ENCODE measurements at regions of chr10 and their contacts with region 1.

Region 1: GRCh38 chr10:114821293-114821914 is at the start of gene FHIP2A:
- DNase-seq: peak; percentile 69 to 96 (median 87)
- ATAC-seq: peak; percentile 98
- H3K4me3 ChIP-seq: peak within 1 kb of the TSS; percentile 83
- H3K4me3 Mint-ChIP-seq: peak within 1 kb of the TSS; percentile 79 to 96 (median 94)
- H3K27ac ChIP-seq: peak within 1 kb of the TSS; percentile 87
- H3K27ac Mint-ChIP-seq: peak within 1 kb of the TSS; percentile 86 to 95 (median 92)
- H3K4me1 ChIP-seq: peaks cover 6 to 22% of the 10 kb centered on the region in 2 donors
- H3K4me1 Mint-ChIP-seq: peaks cover 14 to 44% (median 33%) of the 10 kb centered on the region in 7 donors
- H3K27me3 ChIP-seq: no peaks in the 10 kb centered on the region
- H3K27me3 Mint-ChIP-seq: peaks cover 0 to 29% (median 0%) of the 10 kb centered on the region in 5 donors
- total RNA-seq, gene FHIP2A: 17.5 to 28.7 (median 19.6) TPM

Region 2: DNA sequence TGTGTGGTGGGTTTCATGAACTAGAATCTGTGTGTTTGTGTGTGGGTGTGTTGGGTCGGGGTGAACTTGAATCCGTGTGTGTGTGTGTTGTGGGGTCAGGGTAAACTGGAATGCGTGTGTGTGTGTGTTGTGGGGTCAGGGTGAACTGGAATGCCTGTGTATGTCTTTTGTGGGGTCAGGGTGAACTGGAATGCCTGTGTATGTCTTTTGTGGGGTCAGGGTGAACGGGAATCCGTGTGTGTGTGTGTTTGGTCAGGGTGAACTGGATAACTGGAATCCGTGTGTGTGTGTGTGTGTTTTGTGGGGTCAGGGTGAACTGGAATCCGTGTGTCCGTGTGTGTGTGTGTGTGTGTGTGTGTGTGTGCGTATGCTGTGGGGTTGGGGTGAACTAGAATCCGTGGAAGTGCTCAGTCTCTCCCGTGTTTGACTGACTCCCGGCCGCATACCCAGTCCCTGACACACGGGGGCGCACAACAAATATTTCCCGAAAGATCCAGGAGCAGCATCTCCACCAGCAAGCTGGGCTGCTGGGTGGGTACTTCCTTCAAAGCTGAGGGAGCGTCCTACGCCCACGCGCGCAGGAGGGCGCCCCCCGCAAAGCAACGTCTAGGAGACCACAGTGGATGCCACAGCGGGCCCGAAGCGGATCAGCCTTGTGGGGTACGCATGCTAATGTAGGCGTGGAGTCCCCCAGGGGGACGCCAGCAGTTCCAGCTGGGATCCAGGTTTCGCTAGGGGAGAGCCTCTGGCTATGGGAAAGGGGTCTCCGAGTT is 1142.5 kb before region 1 on chr10:
- CTCF ChIA-PET with region 1: no interaction called
- POLR2A ChIA-PET with region 1: no interaction called
- intact Hi-C with region 1: loop called in 1 of 2 experiments (anchors 10 kb)
- DNase-seq: peak; percentile 32 to 73 (median 51)
- ATAC-seq: peak; percentile 55
- H3K4me3 ChIP-seq: peak overlapping the region; percentile 96
- H3K4me3 Mint-ChIP-seq: peak overlapping the region; percentile 90 to 100 (median 94)
- H3K27ac ChIP-seq: peak overlapping the region; percentile 70
- H3K27ac Mint-ChIP-seq: peak overlapping the region; percentile 56 to 96 (median 90)
- H3K4me1 ChIP-seq: peaks cover 6 to 11% of the 10 kb centered on the region in 2 donors
- H3K4me1 Mint-ChIP-seq: peaks cover 36 to 44% (median 40%) of the 10 kb centered on the region in 7 donors
- H3K27me3 ChIP-seq: no peaks in the 10 kb centered on the region
- H3K27me3 Mint-ChIP-seq: peaks cover 0 to 17% (median 3%) of the 10 kb centered on the region in 5 donors

Region 3: GRCh38 chr10:114173921-114174694 is 647.3 kb before region 1 on chr10 and contains the start of gene CCDC186:
- CTCF ChIA-PET with region 1: no interaction called
- POLR2A ChIA-PET with region 1: interaction called, 5 read pairs
- intact Hi-C with region 1: loop called (anchors 1 to 5 kb)
- DNase-seq: peak; percentile 90 to 98 (median 97)
- ATAC-seq: peak; percentile 98
- H3K4me3 ChIP-seq: peak within 1 kb of the TSS; percentile 83
- H3K4me3 Mint-ChIP-seq: peak within 1 kb of the TSS; percentile 88 to 100 (median 96)
- H3K27ac ChIP-seq: peak within 1 kb of the TSS; percentile 88
- H3K27ac Mint-ChIP-seq: peak within 1 kb of the TSS; percentile 92 to 99 (median 98)
- H3K4me1 ChIP-seq: peaks cover 0 to 8% of the 10 kb centered on the region in 2 donors
- H3K4me1 Mint-ChIP-seq: peaks cover 17 to 51% (median 33%) of the 10 kb centered on the region in 7 donors
- H3K27me3 ChIP-seq: no peaks in the 10 kb centered on the region
- H3K27me3 Mint-ChIP-seq: peaks cover 0 to 24% (median 0%) of the 10 kb centered on the region in 5 donors
- total RNA-seq, gene CCDC186: 18.6 to 42.9 (median 34.5) TPM

Region 4: GRCh38 chr10:114526504-114527238 is 294.7 kb before region 1 on chr10:
- CTCF ChIA-PET with region 1: no interaction called
- POLR2A ChIA-PET with region 1: interaction called, 3 read pairs
- intact Hi-C with region 1: loop called in 1 of 2 experiments (anchors 1 kb)
- DNase-seq: peak; percentile 64 to 97 (median 95)
- ATAC-seq: peak; percentile 94
- H3K4me3 ChIP-seq: peak overlapping the region; percentile 85
- H3K4me3 Mint-ChIP-seq: peak overlapping the region; percentile 88 to 100 (median 98)
- H3K27ac ChIP-seq: peak overlapping the region; percentile 94
- H3K27ac Mint-ChIP-seq: peak overlapping the region; percentile 92 to 100 (median 98)
- H3K4me1 ChIP-seq: peaks cover 35 to 45% of the 10 kb centered on the region in 2 donors
- H3K4me1 Mint-ChIP-seq: peaks cover 34 to 64% (median 53%) of the 10 kb centered on the region in 7 donors
- H3K27me3 ChIP-seq: no peaks in the 10 kb centered on the region
- H3K27me3 Mint-ChIP-seq: peaks cover 0 to 4% (median 0%) of the 10 kb centered on the region in 5 donors

Region 5: DNA sequence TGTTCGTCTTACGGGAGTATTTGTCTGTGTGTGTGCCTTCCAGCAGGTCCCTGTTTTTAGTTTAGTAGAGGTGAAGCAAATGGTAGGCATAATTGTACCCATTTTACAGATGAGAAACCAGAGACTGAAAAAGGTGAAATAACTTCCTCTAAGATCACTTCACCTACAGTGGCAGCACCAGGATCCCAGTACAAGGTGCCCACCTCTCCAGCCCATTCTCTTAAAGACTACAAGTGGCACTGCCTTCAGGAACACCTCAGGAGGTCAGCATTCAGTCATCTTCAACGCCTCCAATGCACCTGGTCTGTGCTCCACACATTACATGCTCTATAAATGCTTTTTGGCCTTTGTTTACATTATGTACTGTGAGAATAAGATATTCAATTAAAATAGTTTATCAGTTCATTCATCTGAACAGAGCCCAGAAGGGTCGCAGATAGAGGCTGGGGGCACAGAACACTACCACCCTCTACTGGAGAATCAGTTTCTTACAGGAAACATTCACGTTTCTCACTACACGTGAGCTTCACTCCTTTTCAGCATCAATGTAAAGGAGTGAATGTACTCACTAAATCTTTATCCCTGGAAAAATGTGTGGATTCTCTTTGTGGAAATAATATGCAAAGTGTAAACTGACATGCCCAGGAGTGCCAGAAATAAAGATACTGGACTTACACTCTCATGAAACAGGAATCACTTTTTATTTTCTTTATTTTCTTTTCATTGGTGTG is 117.9 kb before region 1 on chr10:
- CTCF ChIA-PET with region 1: no interaction called
- POLR2A ChIA-PET with region 1: no interaction called
- intact Hi-C with region 1: loop called in 1 of 2 experiments (anchors 10 kb)
- DNase-seq: peak in 7 of 9 donors; percentile 6 to 46 (median 24)
- ATAC-seq: peak; percentile 67
- H3K4me3 ChIP-seq: no peak overlapping the region
- H3K4me3 Mint-ChIP-seq: no peak overlapping the region
- H3K27ac ChIP-seq: no peak overlapping the region
- H3K27ac Mint-ChIP-seq: no peak overlapping the region
- H3K4me1 ChIP-seq: no peaks in the 10 kb centered on the region
- H3K4me1 Mint-ChIP-seq: no peaks in the 10 kb centered on the region
- H3K27me3 ChIP-seq: no peaks in the 10 kb centered on the region
- H3K27me3 Mint-ChIP-seq: peaks cover 0 to 45% (median 9%) of the 10 kb centered on the region in 5 donors

Region 6: DNA sequence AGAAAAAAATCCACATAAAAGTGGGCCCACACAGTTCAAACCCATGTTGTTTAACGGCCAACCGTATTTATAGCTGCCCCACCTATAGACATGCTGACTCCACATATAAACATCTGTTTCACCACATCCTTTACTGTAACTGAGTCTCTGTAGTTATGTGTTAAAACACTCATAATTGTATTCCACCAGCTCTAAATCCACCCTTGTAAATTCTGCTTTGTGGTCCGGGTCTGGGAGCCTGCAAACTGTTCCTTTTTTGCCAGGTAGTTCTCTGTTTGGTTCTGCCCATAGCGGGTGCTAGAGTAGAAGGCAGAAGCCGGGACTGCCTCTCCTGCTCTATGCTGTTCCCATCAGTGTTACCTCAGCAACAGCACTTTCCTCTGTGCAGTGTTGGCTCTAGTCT is 20.0 kb before region 1 on chr10:
- CTCF ChIA-PET with region 1: no interaction called
- POLR2A ChIA-PET with region 1: no interaction called
- intact Hi-C with region 1: loop called in 1 of 2 experiments (anchors 1 kb)
- DNase-seq: peak in 5 of 9 donors; percentile 2 to 29 (median 7)
- ATAC-seq: peak; percentile 78
- H3K4me3 ChIP-seq: no peak overlapping the region
- H3K4me3 Mint-ChIP-seq: peak overlapping the region in 5 of 10 donors; percentile 8 to 76 (median 19)
- H3K27ac ChIP-seq: no peak overlapping the region
- H3K27ac Mint-ChIP-seq: peak overlapping the region in 2 of 9 donors; percentile 61 to 96
- H3K4me1 ChIP-seq: peaks cover 9 to 10% of the 10 kb centered on the region in 2 donors
- H3K4me1 Mint-ChIP-seq: peaks cover 10 to 48% (median 16%) of the 10 kb centered on the region in 7 donors
- H3K27me3 ChIP-seq: no peaks in the 10 kb centered on the region
- H3K27me3 Mint-ChIP-seq: peaks cover 0 to 6% (median 0%) of the 10 kb centered on the region in 5 donors

Region 7: GRCh38 chr10:114856544-114857282 is 35.3 kb after region 1 on chr10:
- CTCF ChIA-PET with region 1: no interaction called
- POLR2A ChIA-PET with region 1: no interaction called
- intact Hi-C with region 1: loop called in 1 of 2 experiments (anchors 2 kb)
- DNase-seq: peak in 1 of 9 donors; percentile 3
- ATAC-seq: no peak
- H3K4me3 ChIP-seq: no peak overlapping the region
- H3K4me3 Mint-ChIP-seq: peak overlapping the region in 5 of 10 donors; percentile 9 to 49 (median 34)
- H3K27ac ChIP-seq: peak overlapping the region; percentile 39
- H3K27ac Mint-ChIP-seq: peak overlapping the region; percentile 32 to 81 (median 64)
- H3K4me1 ChIP-seq: no peaks in the 10 kb centered on the region
- H3K4me1 Mint-ChIP-seq: peaks cover 0 to 29% (median 0%) of the 10 kb centered on the region in 7 donors
- H3K27me3 ChIP-seq: no peaks in the 10 kb centered on the region
- H3K27me3 Mint-ChIP-seq: no peaks in the 10 kb centered on the region

Measured in naive thymus-derived CD4-positive, alpha-beta T cell (primary cell).